Activated CD4-positive, alpha-beta memory T cell treated with anti-CD3 and anti-CD28 coated beads for 36 hours (primary cell): ENCODE measurements at regions of chr22 and their contacts with region 1.

Region 1: DNA sequence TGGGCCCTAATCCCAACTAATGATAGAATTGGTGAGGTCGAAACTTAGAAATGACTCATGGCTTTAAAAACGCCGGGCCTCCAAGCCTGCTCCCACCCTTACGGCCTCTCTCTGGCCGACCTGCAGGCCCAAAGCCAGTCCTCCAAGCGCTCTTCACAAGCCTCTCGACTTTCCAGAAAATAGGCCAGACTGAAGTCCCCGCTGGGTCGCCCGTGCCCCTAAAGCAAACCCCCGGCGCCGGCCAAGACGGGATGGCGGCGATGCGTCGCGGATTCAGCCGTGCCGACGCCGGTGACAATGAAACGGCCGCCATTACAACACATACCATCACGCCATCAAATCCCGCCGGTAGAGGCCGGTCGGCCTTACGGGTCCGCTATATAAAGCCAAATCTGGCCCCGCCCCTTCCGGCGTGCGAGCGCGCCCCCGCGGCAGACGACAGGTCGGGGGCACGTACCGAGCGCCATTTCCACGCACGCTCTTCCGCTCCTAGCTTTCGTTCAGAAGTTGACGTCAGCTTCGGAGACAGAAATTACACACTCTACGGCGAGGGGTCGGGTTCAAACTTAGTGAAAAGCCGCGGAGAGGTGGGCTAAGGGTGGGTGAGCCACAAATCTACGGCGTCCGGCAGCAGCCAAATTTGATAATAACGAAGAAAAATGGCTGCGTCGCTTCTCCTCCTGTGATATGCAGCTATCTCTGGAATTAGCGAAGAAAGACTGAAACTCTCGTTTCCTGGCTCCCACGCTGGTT is at the start of gene RPL3:
- DNase-seq: peak; percentile 97
- H3K4me3 Mint-ChIP-seq: peak within 1 kb of the TSS; percentile 100
- H3K27ac Mint-ChIP-seq: peak within 1 kb of the TSS; percentile 99
- H3K4me1 Mint-ChIP-seq: peaks cover 37% of the 10 kb centered on the region
- H3K27me3 Mint-ChIP-seq: no peaks in the 10 kb centered on the region
- total RNA-seq, gene RPL3: 2,986 to 3,013 TPM

Region 2: GRCh38 chr22:38705235-38706100 is 614.0 kb before region 1 on chr22 and contains the start of gene GTPBP1:
- CTCF ChIA-PET with region 1: no interaction called
- POLR2A ChIA-PET with region 1: interaction called, 5 read pairs
- intact Hi-C with region 1: loop called (anchors 5 kb)
- DNase-seq: peak; percentile 98
- H3K4me3 Mint-ChIP-seq: peak within 1 kb of the TSS; percentile 92
- H3K27ac Mint-ChIP-seq: peak within 1 kb of the TSS; percentile 97
- H3K4me1 Mint-ChIP-seq: peaks cover 47% of the 10 kb centered on the region
- H3K27me3 Mint-ChIP-seq: peaks cover 1% of the 10 kb centered on the region
- total RNA-seq, gene GTPBP1: 95.4 to 98.1 TPM

Region 3: DNA sequence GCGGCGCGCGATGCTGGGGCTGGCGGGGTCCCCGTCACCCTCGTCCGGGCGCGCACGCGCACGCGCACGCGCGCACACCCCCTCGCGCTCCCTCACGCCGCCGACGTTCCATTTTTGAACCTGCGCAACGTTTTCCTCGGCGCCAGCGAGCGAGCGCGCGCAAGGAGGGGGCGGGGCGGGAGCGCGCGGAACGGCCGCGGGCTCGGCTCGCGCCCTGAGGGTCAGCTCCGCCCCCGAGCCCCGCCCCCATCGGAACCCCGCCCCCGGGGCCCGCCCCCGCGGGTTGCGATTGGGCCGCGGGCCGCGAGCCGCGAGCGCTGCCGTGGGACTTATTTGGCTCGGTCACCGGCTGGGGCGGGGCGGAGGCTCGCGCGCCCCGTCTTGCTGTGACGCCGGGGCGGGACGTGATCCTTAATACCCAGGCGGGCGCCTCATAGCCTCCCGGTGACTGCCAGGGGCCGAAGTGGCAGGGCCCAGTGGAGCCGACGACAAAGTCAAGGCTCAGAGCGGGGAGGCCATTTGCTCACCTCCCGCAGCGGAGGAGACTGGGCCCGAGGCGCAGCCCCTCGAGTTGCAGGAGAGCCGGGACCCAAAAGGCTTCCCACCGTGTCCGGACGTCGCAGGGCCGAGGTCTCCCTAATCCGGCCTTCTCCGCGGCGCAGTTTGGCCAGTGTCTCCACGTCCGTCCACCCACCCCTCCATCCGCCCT is 166.8 kb before region 1 on chr22 and contains the start of gene CBX7:
- CTCF ChIA-PET with region 1: interaction called, 22 read pairs
- POLR2A ChIA-PET with region 1: interaction called, 51 read pairs
- intact Hi-C with region 1: loop called (anchors 1 kb)
- DNase-seq: peak; percentile 97
- H3K4me3 Mint-ChIP-seq: peak within 1 kb of the TSS; percentile 80
- H3K27ac Mint-ChIP-seq: peak within 1 kb of the TSS; percentile 71
- H3K4me1 Mint-ChIP-seq: peaks cover 42% of the 10 kb centered on the region
- H3K27me3 Mint-ChIP-seq: peaks cover 13% of the 10 kb centered on the region
- total RNA-seq, gene CBX7: 35.7 to 37.7 TPM

Region 4: DNA sequence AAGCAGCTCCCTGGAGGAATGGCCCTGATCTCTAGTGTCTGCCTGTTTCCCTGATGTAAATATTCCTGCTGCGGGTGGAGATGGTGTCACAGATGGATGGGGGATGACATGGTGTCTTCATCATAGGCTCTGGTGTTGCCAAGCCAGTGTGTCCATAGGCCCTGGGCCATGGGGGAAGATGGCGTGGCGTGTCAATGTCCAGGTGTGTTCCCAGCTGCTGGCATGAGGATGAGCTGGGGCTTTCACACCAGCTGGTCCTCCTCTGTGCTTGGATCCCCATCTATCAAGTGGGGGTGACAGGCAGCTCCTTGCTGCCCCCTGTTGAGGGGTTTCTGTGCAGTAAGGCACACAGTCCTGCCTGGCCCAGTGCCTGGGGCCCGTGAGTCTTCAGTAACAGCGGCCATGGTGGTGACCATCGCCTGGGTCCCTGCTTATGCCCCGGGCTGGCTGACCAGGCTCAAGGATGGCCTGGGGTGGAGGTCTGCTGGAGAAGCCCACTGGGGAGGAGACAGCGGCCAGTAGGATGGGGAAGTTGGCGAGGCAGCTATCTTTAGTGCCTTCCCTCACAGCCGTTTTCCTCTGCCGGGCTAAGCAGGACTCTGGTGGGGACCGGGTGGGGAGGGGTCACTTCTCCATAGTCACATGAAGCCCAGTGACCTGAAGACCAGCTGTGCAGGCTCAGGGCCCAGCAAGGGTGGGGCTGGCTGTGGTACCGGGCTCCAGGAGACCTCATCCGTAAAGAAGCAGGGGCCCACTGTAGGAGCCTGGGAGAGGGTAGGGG is 12.7 kb before region 1 on chr22:
- CTCF ChIA-PET with region 1: interaction called, 7 read pairs
- POLR2A ChIA-PET with region 1: interaction called, 32 read pairs
- intact Hi-C with region 1: no loop called
- DNase-seq: peak; percentile 75
- H3K4me3 Mint-ChIP-seq: no peak overlapping the region
- H3K27ac Mint-ChIP-seq: no peak overlapping the region
- H3K4me1 Mint-ChIP-seq: peaks cover 3% of the 10 kb centered on the region
- H3K27me3 Mint-ChIP-seq: no peaks in the 10 kb centered on the region

Region 5: DNA sequence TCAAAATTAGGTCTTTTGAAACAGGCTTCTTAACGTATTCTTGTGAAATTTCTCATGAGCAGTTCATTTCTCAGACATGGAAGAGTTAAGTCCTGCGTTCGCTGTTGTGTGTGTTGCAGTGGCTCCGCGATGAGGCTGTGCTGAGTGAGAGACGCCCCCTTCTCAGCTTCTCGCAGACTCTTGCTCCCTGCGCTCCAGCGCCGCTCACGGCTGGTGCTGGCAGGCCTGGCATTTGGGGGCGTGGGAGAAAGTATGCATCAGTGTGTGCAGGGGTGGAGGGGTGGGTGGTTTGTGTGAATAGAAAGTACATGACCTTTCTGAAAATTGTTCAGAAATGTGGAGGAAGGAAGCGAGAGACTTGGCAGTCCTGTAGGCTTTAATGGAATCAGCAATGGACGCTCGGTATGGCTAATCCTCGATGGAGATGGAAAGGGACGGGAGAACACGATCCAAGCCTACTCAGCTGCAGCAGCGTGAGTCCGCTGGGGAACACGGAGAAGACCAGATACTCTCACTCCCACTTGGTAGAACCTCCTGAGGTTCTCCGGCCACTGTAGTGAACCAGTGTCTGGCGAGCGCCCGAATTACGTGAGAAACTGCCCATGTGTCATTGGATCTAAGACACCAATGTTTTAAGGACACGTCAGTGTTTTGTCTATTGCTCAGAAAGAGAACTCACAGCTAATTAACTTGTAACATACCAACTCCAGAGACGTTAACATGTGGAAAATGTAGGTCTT is 86.1 kb after region 1 on chr22:
- CTCF ChIA-PET with region 1: interaction called, 3 read pairs
- POLR2A ChIA-PET with region 1: interaction called, 10 read pairs
- intact Hi-C with region 1: no loop called
- DNase-seq: peak; percentile 22
- H3K4me3 Mint-ChIP-seq: no peak overlapping the region
- H3K27ac Mint-ChIP-seq: no peak overlapping the region
- H3K4me1 Mint-ChIP-seq: peaks cover 54% of the 10 kb centered on the region
- H3K27me3 Mint-ChIP-seq: no peaks in the 10 kb centered on the region

Region 6: GRCh38 chr22:39900306-39901227 is 581.1 kb after region 1 on chr22 and contains the start of gene GRAP2:
- CTCF ChIA-PET with region 1: no interaction called
- POLR2A ChIA-PET with region 1: no interaction called
- intact Hi-C with region 1: loop called (anchors 10 kb)
- DNase-seq: peak; percentile 80
- H3K4me3 Mint-ChIP-seq: peak within 1 kb of the TSS; percentile 84
- H3K27ac Mint-ChIP-seq: peak within 1 kb of the TSS; percentile 93
- H3K4me1 Mint-ChIP-seq: peaks cover 18% of the 10 kb centered on the region
- H3K27me3 Mint-ChIP-seq: no peaks in the 10 kb centered on the region
- total RNA-seq, gene GRAP2: 37.7 to 38.1 TPM